Activated CD8-positive, alpha-beta memory T cell treated with anti-CD3 and anti-CD28 coated beads, Interleukin-2, amount 10 ng/mL, durations not matched to agents 7 days and 5 days (primary cell): ENCODE measurements at regions of chr18 and their contacts with region 1.

Region 1: DNA sequence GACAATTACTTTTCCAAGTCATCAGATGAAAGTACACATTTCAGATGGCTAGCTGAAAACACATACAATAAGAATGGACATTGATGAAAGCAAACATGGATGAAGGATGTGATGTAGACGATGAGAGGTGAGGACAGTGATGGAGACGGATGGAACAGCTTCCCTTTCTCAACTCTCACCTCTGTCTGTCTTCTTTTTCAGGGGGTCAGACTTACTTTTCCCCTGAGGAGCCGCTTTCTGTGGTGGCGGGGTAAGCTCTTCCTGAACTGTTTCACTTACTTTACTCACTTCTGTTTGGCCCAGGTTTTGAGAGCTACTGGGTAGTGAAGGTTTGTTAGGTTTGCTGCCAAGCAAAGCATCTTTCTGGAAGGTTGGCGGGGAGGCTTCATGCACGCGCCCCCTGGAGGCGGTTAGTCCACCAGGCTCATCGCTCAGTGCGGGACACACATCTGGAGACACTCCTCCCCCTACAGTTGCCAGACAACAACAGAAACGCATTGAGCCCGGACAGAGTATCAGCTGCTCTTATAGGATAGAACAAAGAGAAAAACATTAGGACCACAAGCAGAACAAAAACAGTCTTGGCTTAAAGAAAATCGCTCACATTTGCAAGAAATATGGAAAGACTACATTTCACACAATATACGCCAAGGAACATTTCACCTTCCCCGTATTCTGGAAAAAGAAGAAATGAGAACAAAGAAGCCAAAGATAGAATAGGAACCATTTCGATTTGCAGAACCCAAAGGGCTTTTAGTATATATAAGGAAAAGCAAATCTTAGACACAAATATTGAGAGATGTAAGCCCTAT is 90.5 kb downstream of the MYOM1 start:
- DNase-seq: peak; percentile 87
- ATAC-seq: peak; percentile 97
- H3K4me3 Mint-ChIP-seq: no peak overlapping the region
- H3K27ac Mint-ChIP-seq: no peak overlapping the region
- H3K4me1 Mint-ChIP-seq: peaks cover 12% of the 10 kb centered on the region
- H3K27me3 Mint-ChIP-seq: no peaks in the 10 kb centered on the region

Region 2: DNA sequence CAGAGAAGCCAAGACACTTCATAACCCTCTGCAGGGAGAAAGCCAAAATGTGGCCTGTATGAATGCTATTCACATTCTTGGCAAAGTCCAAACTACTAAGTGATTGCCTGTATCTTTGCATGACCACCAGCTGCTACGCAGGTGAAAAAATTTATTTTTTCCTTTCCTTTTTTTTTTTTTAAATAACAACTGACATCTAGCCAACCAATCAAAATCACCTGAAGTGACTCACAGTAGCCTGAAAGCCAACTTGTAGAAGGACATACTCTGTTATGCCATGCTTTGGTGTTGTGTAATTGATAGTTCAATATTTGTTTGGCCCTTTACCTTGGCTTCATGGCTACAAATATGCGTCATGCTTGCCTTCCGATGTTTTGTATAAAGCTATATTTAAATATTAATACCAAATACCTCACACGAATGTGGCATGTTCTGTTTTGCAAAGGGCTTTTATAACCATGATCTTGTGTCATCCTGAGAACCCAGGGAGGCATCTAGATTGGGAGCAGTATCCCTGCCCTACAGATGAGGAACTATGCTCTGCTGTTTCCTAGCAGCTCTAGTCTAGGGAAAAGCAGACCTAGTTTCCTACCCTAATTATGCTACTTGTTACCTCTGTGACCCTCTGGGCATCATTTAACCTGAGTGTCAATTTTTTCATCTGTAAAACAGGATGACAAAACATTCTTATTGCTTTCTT is 11.6 kb before region 1 on chr18:
- CTCF ChIA-PET with region 1: interaction called, 14 read pairs
- DNase-seq: no peak
- ATAC-seq: no peak
- H3K4me3 Mint-ChIP-seq: no peak overlapping the region
- H3K27ac Mint-ChIP-seq: no peak overlapping the region
- H3K4me1 Mint-ChIP-seq: no peaks in the 10 kb centered on the region
- H3K27me3 Mint-ChIP-seq: no peaks in the 10 kb centered on the region

Region 3: GRCh38 chr18:3140986-3141639 is 11.9 kb after region 1 on chr18:
- CTCF ChIA-PET with region 1: interaction called, 11 read pairs
- DNase-seq: no peak
- ATAC-seq: no peak
- H3K4me3 Mint-ChIP-seq: no peak overlapping the region
- H3K27ac Mint-ChIP-seq: no peak overlapping the region
- H3K4me1 Mint-ChIP-seq: no peaks in the 10 kb centered on the region
- H3K27me3 Mint-ChIP-seq: no peaks in the 10 kb centered on the region